ENCODE measurements at regions of chr6 and their contacts with region 1.

Region 1: GRCh38 chr6:170529839-170530469 is 23.2 kb downstream of the PSMB1 start:
- DNase-seq: peak in 4 of 5 donors; percentile 41 to 53 (median 48)
- H3K4me3 ChIP-seq: no peak overlapping the region
- H3K4me3 Mint-ChIP-seq: no peak overlapping the region
- H3K27ac ChIP-seq: no peak overlapping the region
- H3K27ac Mint-ChIP-seq: peak overlapping the region in 2 of 7 donors; percentile 35 to 48
- H3K4me1 ChIP-seq: no peaks in the 10 kb centered on the region
- H3K4me1 Mint-ChIP-seq: peaks cover 0 to 2% (median under 1%) of the 10 kb centered on the region in 4 donors
- H3K27me3 ChIP-seq: no peaks in the 10 kb centered on the region
- H3K27me3 Mint-ChIP-seq: no peaks in the 10 kb centered on the region

Region 2: DNA sequence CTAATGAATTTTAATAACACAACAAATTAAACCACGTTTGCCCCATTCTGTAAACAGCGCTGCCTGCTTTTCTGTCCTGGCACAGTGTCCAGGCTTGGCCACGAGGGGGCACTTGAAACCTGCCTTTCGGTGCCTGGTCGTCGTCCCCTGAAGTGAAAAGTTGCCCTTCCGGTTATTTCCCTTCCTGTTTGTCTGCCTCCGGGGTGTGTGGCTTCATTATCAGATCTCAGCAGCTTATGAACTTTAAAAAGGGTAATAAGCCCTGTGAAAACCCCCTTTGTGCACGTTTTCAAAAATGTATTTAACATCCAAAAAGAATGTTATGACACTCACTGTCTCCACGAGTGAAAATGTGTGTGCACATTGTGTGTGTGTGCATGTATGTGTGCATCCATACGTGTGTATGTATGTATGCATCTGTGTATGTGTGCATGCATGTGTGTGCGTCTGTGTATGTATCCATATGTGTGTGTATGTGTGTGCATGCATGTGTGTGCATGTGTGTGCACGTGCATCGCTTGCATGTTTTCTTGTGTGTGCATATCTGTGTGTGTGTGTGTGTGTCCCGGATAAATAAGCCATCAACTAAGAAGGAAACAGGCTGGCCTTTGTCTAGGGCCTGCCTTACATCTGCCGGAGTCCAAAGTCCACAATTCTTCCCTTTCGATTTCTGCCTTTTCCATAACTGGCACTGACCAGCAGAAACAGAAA is 1634.7 kb before region 1 on chr6:
- CTCF ChIA-PET with region 1: interaction called, 8 read pairs
- POLR2A ChIA-PET with region 1: no interaction called
- intact Hi-C with region 1: loop called (anchors 1 kb)
- DNase-seq: peak; percentile 71 to 78 (median 74)
- H3K4me3 ChIP-seq: no peak overlapping the region
- H3K4me3 Mint-ChIP-seq: peak overlapping the region; percentile 40 to 87 (median 60)
- H3K27ac ChIP-seq: no peak overlapping the region
- H3K27ac Mint-ChIP-seq: peak overlapping the region in 5 of 7 donors; percentile 8 to 77 (median 53)
- H3K4me1 ChIP-seq: peaks cover 8% of the 10 kb centered on the region
- H3K4me1 Mint-ChIP-seq: peaks cover 9 to 28% (median 11%) of the 10 kb centered on the region in 4 donors
- H3K27me3 ChIP-seq: no peaks in the 10 kb centered on the region
- H3K27me3 Mint-ChIP-seq: peaks cover 3% of the 10 kb centered on the region in 2 donors

Region 3: GRCh38 chr6:168956884-168957730 is 1572.8 kb before region 1 on chr6:
- CTCF ChIA-PET with region 1: no interaction called
- POLR2A ChIA-PET with region 1: no interaction called
- intact Hi-C with region 1: loop called (anchors 2 kb)
- DNase-seq: peak in 4 of 5 donors; percentile 25 to 35 (median 32)
- H3K4me3 ChIP-seq: no peak overlapping the region
- H3K4me3 Mint-ChIP-seq: no peak overlapping the region
- H3K27ac ChIP-seq: no peak overlapping the region
- H3K27ac Mint-ChIP-seq: no peak overlapping the region
- H3K4me1 ChIP-seq: no peaks in the 10 kb centered on the region
- H3K4me1 Mint-ChIP-seq: no peaks in the 10 kb centered on the region
- H3K27me3 ChIP-seq: peaks cover 3% of the 10 kb centered on the region
- H3K27me3 Mint-ChIP-seq: peaks cover 15 to 16% of the 10 kb centered on the region in 2 donors

Region 4: DNA sequence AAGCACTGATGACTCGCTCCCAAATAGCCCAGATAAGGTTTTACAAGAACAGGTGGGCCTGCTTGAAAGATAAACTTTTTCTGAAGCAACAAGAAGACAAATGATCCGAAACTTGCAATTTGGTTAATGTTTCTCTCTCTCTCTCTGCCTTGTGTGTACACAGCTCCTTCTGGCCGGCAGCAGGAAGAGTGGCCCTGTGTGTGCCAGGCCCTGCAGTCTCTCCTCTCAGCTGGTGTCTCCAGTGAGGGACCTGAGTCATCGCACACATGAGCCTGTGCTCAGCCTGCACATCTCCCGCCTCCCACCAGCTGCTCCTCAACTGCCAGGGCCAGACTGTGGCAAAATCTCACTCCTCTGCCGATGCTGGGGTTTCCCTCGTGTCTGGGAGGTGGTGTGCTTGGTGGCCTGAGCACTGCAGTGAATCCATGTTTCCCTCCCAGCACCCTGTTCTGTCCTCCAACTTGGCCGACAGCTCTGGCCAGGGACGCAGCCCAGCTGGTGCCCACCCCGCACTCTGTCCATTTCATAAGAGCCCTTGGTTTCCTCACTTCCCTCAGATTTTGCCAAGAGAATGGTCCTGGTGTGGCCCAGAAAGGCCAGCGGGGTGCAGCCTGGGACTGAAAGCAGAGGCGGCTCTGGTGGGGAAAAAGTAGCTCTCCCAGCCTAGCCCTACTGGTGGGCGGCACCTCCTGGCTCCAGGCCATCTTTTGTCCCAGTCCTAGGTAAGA is 729.1 kb before region 1 on chr6:
- CTCF ChIA-PET with region 1: interaction called, 12 read pairs
- POLR2A ChIA-PET with region 1: no interaction called
- intact Hi-C with region 1: no loop called
- DNase-seq: no peak
- H3K4me3 ChIP-seq: no peak overlapping the region
- H3K4me3 Mint-ChIP-seq: no peak overlapping the region
- H3K27ac ChIP-seq: no peak overlapping the region
- H3K27ac Mint-ChIP-seq: no peak overlapping the region
- H3K4me1 ChIP-seq: peaks cover 27% of the 10 kb centered on the region
- H3K4me1 Mint-ChIP-seq: peaks cover 31 to 33% (median 31%) of the 10 kb centered on the region in 4 donors
- H3K27me3 ChIP-seq: no peaks in the 10 kb centered on the region
- H3K27me3 Mint-ChIP-seq: peaks cover 20 to 24% of the 10 kb centered on the region in 2 donors

Region 5: GRCh38 chr6:169831450-169832246 is 698.3 kb before region 1 on chr6:
- CTCF ChIA-PET with region 1: interaction called, 41 read pairs
- POLR2A ChIA-PET with region 1: no interaction called
- intact Hi-C with region 1: no loop called
- DNase-seq: peak in 4 of 5 donors; percentile 52 to 56 (median 54)
- H3K4me3 ChIP-seq: no peak overlapping the region
- H3K4me3 Mint-ChIP-seq: no peak overlapping the region
- H3K27ac ChIP-seq: no peak overlapping the region
- H3K27ac Mint-ChIP-seq: peak overlapping the region in 1 of 7 donors; percentile 3
- H3K4me1 ChIP-seq: no peaks in the 10 kb centered on the region
- H3K4me1 Mint-ChIP-seq: peaks cover 0 to 6% (median 4%) of the 10 kb centered on the region in 4 donors
- H3K27me3 ChIP-seq: peaks cover 3% of the 10 kb centered on the region
- H3K27me3 Mint-ChIP-seq: peaks cover 26 to 30% of the 10 kb centered on the region in 2 donors

Region 6: DNA sequence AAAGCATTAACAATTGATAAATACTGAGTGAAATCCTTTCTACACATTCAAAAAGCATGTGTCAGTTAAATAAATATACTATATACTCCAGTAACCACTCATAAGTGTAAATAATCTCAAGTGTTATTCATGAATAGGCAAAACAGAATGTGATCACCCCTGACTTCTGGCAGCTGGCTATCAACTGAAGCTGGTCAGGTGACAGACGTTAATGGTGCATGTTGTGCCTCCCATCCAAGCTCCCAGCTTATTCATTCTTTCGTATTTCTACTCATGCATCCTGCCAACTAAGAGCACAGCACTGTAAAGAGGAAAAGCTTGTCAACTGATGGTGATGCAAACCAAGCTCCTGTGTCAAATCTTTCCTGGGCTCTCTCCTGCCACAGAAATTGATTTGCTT is 15.5 kb after region 1 on chr6:
- CTCF ChIA-PET with region 1: interaction called, 25 read pairs
- POLR2A ChIA-PET with region 1: no interaction called
- intact Hi-C with region 1: no loop called
- DNase-seq: no peak
- H3K4me3 ChIP-seq: no peak overlapping the region
- H3K4me3 Mint-ChIP-seq: no peak overlapping the region
- H3K27ac ChIP-seq: no peak overlapping the region
- H3K27ac Mint-ChIP-seq: peak overlapping the region in 1 of 7 donors; percentile 35
- H3K4me1 ChIP-seq: peaks cover 19% of the 10 kb centered on the region
- H3K4me1 Mint-ChIP-seq: peaks cover 19 to 30% (median 25%) of the 10 kb centered on the region in 4 donors
- H3K27me3 ChIP-seq: no peaks in the 10 kb centered on the region
- H3K27me3 Mint-ChIP-seq: no peaks in the 10 kb centered on the region